Left cardiac atrium (tissue), 4 donors: ENCODE measurements at regions of chrX and their contacts with region 1.

Region 1: DNA sequence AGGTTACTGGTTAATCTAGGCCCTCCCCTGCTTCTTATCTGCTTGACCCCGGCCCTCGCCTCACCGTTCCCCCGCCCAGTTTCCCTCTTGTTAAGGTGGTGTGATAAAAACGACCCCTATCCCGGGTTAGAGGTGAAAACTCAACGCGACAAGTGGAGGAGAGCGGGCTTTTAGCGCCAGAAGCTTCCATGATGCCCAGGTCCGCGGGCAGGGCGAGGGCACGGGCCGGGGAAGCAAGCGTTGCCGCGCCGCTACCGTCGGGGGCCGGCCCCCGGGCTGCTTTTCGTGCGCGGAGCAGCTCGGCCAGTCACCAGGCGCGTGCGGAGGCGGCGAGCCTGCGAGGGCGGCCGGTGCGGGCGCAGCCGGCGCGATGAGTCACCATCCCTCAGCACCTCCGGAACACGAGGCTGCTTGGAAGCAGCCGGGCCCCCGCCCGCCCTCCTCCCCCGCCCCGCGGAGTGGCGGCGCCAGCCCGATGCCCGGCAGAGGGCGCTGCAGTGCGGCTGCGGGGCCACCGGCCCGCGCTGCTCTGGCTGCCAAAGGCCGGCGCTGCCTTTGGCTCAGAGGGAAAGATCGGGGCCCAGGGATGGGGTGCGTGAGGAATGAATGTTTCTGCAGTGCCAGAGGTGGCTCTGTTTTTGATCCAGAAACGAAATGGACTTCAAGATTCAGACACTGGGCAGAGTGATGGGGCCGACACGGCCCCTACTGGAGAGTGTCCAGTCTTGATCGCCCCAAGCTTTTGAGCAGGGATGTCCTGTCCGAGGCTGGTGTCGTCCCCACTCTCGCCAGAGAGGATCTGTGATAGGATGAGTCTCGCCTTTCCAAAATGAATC is 107.8 kb downstream of the NHSL2 start:
- DNase-seq: peak; percentile 90
- ATAC-seq: peak; percentile 98 to 99

Region 2: DNA sequence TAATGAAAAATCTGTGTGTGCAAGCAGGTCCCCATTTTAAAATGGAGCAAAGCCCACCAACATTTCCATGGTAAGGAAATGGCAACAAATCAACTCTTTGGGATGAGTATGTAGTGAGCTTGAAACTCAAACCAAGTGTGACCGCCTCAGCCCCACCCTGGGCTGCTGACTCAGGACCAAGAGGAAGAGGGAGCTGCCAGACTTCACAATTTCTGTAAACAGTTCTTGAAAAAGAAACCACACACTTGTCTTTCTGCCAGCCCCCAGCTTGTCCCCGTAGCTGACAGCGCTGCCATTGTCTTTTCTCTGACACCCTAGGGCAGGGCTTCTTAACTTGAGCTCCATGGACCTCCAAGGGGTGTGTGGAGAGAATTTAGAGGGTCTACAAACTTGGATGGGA is 102.9 kb after region 1 on chrX:
- intact Hi-C with region 1: loop called (anchors 2 to 5 kb)
- DNase-seq: peak; percentile 72
- ATAC-seq: peak; percentile 79 to 80

Region 3: GRCh38 chrX:72126539-72127140 is 108.1 kb after region 1 on chrX:
- intact Hi-C with region 1: loop called (anchors 2 to 5 kb)
- DNase-seq: peak; percentile 86
- ATAC-seq: peak; percentile 77 to 86

Region 4: GRCh38 chrX:72181178-72182125 is 163.0 kb after region 1 on chrX and contains the start of gene PIN4:
- intact Hi-C with region 1: no loop called
- DNase-seq: peak; percentile 93
- ATAC-seq: peak; percentile 97 to 99
- total RNA-seq, gene PIN4: 9.1 to 9.2 TPM